ENCODE measurements at regions of chr1 and their contacts with region 1.

Region 1: DNA sequence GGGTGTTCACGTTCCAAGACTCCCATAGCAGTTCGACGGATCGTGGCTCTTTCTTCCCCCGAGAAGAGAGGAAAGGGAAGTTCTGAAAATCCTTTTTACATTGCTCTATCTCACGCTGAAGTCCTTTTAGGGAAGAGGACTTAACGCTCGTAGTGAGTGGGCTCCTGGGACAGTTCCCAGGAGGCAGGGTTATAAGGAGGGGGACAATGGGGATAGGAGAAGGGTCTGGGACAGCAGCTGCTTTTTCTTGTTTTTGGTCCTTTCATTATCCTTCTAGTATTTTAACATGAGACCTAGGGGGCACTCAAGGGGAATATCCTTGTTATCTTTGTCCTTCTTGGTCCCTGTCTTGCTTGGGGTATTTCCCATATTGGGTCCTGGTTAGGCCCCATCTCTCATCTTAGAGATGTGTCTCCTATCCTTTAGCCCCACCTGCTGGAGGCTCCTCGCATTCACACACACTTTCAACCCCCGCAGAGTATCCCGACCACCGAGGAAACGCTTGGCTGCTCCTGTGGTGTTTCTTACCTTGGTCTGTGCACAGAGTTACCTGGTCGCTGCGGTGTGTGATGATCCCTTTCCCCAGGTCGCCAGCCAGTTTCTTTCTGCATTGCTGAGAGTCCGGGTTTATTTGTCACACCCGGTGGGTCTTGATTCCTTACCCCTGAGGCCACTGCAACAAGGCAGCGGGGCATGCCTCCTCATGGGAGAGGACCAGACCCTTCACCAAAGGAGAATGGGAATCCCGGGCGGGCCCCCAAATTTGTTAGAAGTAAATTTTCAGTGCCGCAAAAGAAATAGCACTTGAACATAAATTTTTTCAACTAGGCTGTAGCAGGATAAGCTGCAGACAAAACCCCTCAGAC is 29.7 kb downstream of the SCCPDH start:
- DNase-seq: peak; percentile 20 to 55 (median 44)
- ATAC-seq: peak; percentile 81
- H3K4me3 ChIP-seq: no peak overlapping the region
- H3K4me3 Mint-ChIP-seq: no peak overlapping the region
- H3K27ac ChIP-seq: no peak overlapping the region
- H3K27ac Mint-ChIP-seq: no peak overlapping the region
- H3K4me1 ChIP-seq: no peaks in the 10 kb centered on the region
- H3K4me1 Mint-ChIP-seq: no peaks in the 10 kb centered on the region
- H3K27me3 ChIP-seq: no peaks in the 10 kb centered on the region
- H3K27me3 Mint-ChIP-seq: no peaks in the 10 kb centered on the region

Region 2: DNA sequence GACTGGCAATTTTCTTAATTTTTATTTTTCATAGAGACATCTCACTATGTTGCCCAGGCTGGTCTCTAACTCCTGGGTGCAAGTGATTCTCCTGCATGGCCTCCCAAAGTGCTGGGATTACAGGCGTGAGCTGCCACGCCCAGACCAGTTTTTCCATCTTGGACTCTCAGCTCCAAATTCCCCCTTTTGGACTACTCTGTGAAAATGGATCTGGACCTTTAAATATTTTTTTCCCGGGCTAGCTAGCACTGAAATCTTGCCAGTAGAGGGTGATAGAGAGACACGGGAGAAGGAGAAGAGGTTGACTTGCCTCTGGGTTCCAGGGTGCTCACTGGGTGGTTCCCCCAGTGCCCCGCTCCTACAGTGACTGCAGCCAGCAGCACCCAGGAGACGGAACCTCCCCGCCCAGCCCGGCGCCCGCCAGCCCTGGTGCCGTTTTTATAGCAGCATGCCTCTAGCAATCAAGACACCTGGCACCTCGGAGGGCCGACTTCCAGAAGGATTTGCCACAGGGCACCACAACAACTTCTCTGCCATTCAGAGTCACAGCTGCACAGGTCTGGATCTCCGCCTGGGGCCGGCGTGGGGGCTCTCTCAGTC is 64.4 kb before region 1 on chr1:
- CTCF ChIA-PET with region 1: no interaction called
- POLR2A ChIA-PET with region 1: no interaction called
- intact Hi-C with region 1: loop called (anchors 1 kb)
- DNase-seq: peak; percentile 10 to 55 (median 42)
- ATAC-seq: peak; percentile 98
- H3K4me3 ChIP-seq: no peak overlapping the region
- H3K4me3 Mint-ChIP-seq: peak overlapping the region in 2 of 10 donors; percentile 16 to 27
- H3K27ac ChIP-seq: no peak overlapping the region
- H3K27ac Mint-ChIP-seq: no peak overlapping the region
- H3K4me1 ChIP-seq: no peaks in the 10 kb centered on the region
- H3K4me1 Mint-ChIP-seq: peaks cover 0 to 5% (median 0%) of the 10 kb centered on the region in 7 donors
- H3K27me3 ChIP-seq: no peaks in the 10 kb centered on the region
- H3K27me3 Mint-ChIP-seq: no peaks in the 10 kb centered on the region

Measured in naive thymus-derived CD4-positive, alpha-beta T cell (primary cell).